ENCODE measurements at regions of chr9 and their contacts with region 1.

Region 1: GRCh38 chr9:75238311-75238978 is 150.1 kb downstream of the OSTF1 start:
- DNase-seq: peak; percentile 64
- ATAC-seq: peak; percentile 99
- H3K4me3 ChIP-seq: no peak overlapping the region
- H3K27ac ChIP-seq: no peak overlapping the region
- H3K4me1 ChIP-seq: peaks cover 9% of the 10 kb centered on the region; the same call in 1 of the 2 replicates
- H3K27me3 ChIP-seq: no peaks in the 10 kb centered on the region
- CTCF ChIP-seq: peak; percentile 89
- EP300 ChIP-seq: no peak
- POLR2A ChIP-seq: no peak
- RAD21 ChIP-seq: peak; percentile 72; the same call in 1 of the 2 replicates

Region 2: DNA sequence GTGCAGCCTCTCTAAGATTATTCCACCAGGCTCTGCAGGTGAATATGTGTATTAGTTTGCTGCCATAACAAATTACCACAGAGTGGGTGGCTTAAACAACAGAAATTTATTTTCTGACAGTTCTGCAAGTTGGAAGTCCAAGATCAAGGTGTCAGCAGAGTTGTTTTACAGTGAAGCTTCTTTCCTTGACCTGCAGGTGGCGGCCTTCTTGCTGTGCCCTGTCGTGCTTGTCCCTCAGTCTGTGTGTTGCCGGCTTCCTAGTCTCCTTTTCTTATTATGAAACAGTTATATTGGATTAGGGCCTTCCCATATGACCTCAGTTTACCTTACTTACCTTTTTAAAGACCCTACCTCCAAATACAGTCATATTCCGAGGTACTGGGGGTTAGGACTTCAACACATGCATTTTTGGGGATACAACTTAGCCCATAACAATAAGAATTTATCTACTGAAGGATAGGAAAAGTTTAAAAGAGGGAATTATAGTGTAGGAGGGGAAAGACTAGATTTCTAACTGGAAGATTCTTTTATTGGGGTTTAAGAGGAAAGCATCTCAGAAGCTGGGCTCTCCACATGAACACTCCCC is 52.8 kb before region 1 on chr9:
- CTCF ChIA-PET with region 1: interaction called, 4 read pairs
- POLR2A ChIA-PET with region 1: no interaction called
- in situ Hi-C with region 1: no loop called
- intact Hi-C with region 1: loop called (anchors 1 kb)
- DNase-seq: peak; percentile 16
- ATAC-seq: peak; percentile 89
- H3K4me3 ChIP-seq: no peak overlapping the region
- H3K27ac ChIP-seq: no peak overlapping the region
- H3K4me1 ChIP-seq: no peaks in the 10 kb centered on the region
- H3K27me3 ChIP-seq: no peaks in the 10 kb centered on the region
- CTCF ChIP-seq: peak; percentile 61
- EP300 ChIP-seq: no peak
- POLR2A ChIP-seq: no peak
- RAD21 ChIP-seq: no peak

Region 3: DNA sequence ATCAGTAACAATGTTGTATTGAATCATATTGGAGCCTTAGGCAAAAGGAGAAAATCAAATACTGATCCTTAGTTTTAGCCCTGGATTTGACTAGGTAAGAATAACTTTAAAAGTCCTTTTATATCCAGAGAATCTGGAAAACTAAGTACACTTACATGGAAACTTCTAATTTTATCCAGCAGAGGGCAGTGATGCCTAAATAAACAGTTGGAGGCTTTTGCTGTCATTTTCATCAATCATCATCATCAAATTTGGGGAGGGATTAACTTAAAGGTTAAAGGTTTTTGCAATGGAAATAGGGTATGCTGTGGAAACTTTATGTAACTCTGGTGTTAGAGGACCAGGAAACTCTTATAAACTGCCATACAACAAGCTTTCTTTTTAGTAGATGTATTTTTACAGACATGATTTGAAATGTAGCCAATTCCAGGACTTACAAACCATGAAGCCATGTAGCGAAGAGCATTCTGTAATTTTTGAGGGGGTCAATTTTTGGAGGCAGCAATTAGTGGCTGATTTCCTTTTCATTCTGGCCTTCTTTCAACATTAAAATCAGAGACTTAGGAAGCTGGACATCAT is 37.5 kb before region 1 on chr9:
- CTCF ChIA-PET with region 1: interaction called, 50 read pairs
- POLR2A ChIA-PET with region 1: no interaction called
- in situ Hi-C with region 1: loop called (anchors 5 kb)
- intact Hi-C with region 1: loop called (anchors 1 kb)
- DNase-seq: peak; percentile 47
- ATAC-seq: no peak; the same call in 2 of the 3 replicates
- H3K4me3 ChIP-seq: no peak overlapping the region
- H3K27ac ChIP-seq: no peak overlapping the region
- H3K4me1 ChIP-seq: no peaks in the 10 kb centered on the region
- H3K27me3 ChIP-seq: peaks cover 0 to under 1% of the 10 kb centered on the region in 2 experiments; a peak in 2 of 5 replicates
- CTCF ChIP-seq: peak; percentile 63
- EP300 ChIP-seq: no peak
- POLR2A ChIP-seq: no peak
- RAD21 ChIP-seq: peak; percentile 49

Region 4: GRCh38 chr9:75213765-75214164 is 24.7 kb before region 1 on chr9:
- CTCF ChIA-PET with region 1: no interaction called
- POLR2A ChIA-PET with region 1: no interaction called
- in situ Hi-C with region 1: no loop called
- intact Hi-C with region 1: no loop called
- DNase-seq: no peak
- ATAC-seq: no peak
- H3K4me3 ChIP-seq: no peak overlapping the region
- H3K27ac ChIP-seq: no peak overlapping the region
- H3K4me1 ChIP-seq: peaks cover under 1% of the 10 kb centered on the region; the same call in 1 of the 2 replicates
- H3K27me3 ChIP-seq: no peaks in the 10 kb centered on the region
- CTCF ChIP-seq: no peak
- EP300 ChIP-seq: no peak
- POLR2A ChIP-seq: no peak
- RAD21 ChIP-seq: no peak

Region 5: GRCh38 chr9:75451505-75451904 is 213.1 kb after region 1 on chr9:
- CTCF ChIA-PET with region 1: no interaction called
- POLR2A ChIA-PET with region 1: no interaction called
- in situ Hi-C with region 1: no loop called
- intact Hi-C with region 1: no loop called
- DNase-seq: no peak
- ATAC-seq: no peak
- H3K4me3 ChIP-seq: no peak overlapping the region
- H3K27ac ChIP-seq: no peak overlapping the region
- H3K4me1 ChIP-seq: no peaks in the 10 kb centered on the region
- H3K27me3 ChIP-seq: no peaks in the 10 kb centered on the region
- CTCF ChIP-seq: no peak
- EP300 ChIP-seq: no peak
- POLR2A ChIP-seq: no peak
- RAD21 ChIP-seq: no peak

Region 6: DNA sequence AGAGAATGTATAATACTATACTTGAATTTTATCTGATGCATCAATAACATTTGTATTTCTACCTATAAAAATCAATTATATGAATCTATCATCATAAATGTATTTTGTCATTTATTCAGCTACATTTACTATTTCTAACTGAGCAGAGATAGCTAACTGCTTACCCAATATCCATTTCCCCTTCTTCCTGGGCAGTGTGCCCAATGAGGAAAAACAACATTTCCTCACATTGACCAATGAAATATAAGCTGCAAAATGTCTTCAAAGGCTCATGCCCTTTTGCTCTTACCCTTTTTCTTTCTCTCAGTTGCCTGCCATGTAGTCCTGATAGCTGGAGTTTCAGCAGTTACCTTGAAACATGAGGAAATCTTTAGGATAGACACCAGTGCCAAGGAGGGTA is 266.3 kb after region 1 on chr9:
- CTCF ChIA-PET with region 1: no interaction called
- POLR2A ChIA-PET with region 1: no interaction called
- in situ Hi-C with region 1: no loop called
- intact Hi-C with region 1: no loop called
- DNase-seq: no peak
- ATAC-seq: no peak
- H3K4me3 ChIP-seq: no peak overlapping the region
- H3K27ac ChIP-seq: no peak overlapping the region
- H3K4me1 ChIP-seq: no peaks in the 10 kb centered on the region
- H3K27me3 ChIP-seq: no peaks in the 10 kb centered on the region
- CTCF ChIP-seq: no peak
- EP300 ChIP-seq: no peak
- POLR2A ChIP-seq: no peak
- RAD21 ChIP-seq: no peak